Posterior cingulate gyrus (tissue), 11 donors: ENCODE measurements at regions of chr12 and their contacts with region 1.

Region 1: DNA sequence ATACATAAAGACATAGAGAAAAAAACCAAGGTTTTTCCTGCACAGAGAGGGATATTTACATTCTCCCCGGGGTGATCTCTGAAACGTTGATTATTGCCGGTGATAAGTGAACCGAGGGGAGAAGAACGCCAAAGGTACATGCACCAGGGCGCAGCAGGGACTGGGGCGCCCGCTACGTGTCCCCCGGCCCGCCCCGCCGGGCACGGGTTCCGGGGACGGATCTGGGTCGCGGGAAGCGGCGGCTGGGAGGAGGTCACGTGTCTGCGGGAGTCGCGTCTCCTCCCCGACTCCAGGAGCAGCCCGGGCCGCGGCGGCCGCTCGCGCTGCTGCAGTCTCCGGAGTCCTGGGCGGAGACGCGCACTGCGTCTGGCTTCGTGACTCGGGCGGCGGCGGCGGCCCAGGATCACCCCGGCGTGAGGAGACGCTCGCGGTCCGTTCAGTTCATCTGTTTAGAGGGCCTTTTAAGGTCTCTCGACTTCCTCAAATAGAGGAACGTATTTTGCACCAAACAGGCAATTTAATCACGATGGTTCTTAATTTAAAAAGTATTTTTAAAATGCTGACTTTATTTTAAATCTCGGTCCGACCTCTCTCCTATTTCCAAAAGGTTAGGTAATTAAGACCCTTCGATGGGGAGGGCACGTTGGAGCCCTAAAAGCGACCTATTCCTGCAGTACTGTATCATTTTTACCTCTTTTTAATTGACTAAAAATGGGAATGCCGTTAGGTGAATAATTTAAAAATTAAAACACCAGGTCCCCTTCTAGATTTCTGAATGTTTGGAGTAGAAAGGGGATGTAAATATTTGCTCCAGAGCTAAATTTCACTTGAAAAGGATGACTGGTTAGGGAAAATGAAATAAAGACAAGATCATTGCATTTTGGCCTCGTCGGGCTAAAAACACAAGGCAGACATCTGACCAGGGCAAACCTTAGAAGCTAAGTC is 1.8 kb upstream of the BHLHE41 start:
- DNase-seq: peak; percentile 76 to 98 (median 88)

Region 2: DNA sequence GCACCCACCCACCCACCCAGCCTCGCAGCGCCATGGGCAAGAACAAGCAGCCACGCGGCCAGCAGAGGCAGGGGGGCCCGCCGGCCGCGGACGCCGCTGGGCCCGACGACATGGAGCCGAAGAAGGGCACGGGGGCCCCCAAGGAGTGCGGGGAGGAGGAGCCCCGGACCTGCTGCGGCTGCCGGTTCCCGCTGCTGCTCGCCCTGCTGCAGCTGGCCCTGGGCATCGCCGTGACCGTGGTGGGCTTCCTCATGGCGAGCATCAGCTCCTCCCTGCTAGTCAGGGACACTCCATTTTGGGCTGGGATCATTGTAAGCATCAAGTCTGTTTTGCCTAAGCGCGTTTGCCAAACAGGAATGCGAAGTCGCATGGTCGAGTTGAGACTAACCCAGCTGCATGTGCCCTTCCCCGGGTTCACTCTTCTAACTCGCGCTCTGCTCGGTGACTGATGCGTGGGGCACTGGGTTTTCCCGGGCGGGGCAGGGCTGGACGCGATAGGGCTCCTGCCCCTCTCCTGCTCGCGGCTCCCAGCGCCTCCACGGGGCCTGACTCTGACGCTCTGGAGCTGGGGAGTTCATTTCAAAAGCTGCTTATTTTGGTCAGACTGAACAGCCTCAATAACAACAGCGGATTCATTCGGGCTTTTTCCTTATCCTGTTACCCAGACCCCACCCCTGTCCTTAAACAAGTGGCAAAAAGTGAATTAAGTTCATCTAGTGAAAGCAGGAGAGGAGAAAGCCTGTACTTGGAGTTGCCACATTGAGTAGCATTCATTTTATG is 69.2 kb after region 1 on chr12:
- intact Hi-C with region 1: loop called (anchors 2 kb)
- DNase-seq: peak; percentile 49 to 94 (median 69)

Region 3: GRCh38 chr12:26274441-26275312 is 148.1 kb after region 1 on chr12:
- intact Hi-C with region 1: loop called (anchors 5 kb)
- DNase-seq: peak in 9 of 10 donors; percentile 38 to 93 (median 51)

Region 4: DNA sequence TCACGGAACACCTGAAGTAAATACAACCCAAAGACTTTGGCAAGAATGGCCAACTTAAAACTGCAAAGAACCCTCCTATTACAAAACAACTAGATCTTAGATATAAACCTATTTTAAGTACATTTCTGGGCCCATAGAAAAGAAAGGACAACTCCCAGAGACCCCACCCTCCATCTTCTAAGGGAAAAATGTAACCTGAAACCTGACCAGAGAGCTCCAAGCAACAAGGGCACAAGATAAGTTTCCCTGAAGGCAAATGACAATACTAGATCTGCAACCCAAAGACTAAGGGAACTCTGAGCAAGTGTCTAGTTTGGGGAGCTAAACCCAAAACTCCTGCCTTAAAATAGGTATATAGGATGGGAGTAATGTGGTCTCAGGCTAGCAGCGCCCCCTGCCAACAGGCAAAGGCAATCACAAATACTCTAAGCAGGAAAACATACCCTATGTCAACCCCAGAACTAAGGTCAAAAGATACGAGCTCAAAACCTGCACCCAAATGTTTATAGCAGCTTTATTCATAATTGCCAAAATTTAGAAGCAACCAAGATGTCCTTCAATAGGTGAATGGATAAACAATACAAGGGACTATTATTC is 487.5 kb after region 1 on chr12:
- intact Hi-C with region 1: loop called (anchors 5 kb)
- DNase-seq: peak in 7 of 10 donors; percentile 25 to 90 (median 36)